IMR-90 (cell line): ENCODE measurements at regions of chr17 and their contacts with region 1.

Region 1: GRCh38 chr17:51289696-51290111 is 29.4 kb downstream of the UTP18 start:
- DNase-seq: peak; percentile 22
- ATAC-seq: peak; percentile 92
- H3K4me3 ChIP-seq: no peak overlapping the region
- H3K27ac ChIP-seq: peak overlapping the region; percentile 80; the same call in 1 of the 2 replicates
- H3K4me1 ChIP-seq: peaks cover 8% of the 10 kb centered on the region
- H3K27me3 ChIP-seq: no peaks in the 10 kb centered on the region
- CTCF ChIP-seq: no peak
- POLR2A ChIP-seq: no peak
- RAD21 ChIP-seq: no peak

Region 2: GRCh38 chr17:51257150-51258081 is 32.3 kb before region 1 on chr17:
- CTCF ChIA-PET with region 1: no interaction called
- POLR2A ChIA-PET with region 1: no interaction called
- dilution Hi-C with region 1: no loop called
- in situ Hi-C with region 1: no loop called
- intact Hi-C with region 1: no loop called
- DNase-seq: no peak
- ATAC-seq: no peak
- H3K4me3 ChIP-seq: no peak overlapping the region
- H3K27ac ChIP-seq: no peak overlapping the region
- H3K4me1 ChIP-seq: no peaks in the 10 kb centered on the region; the same call in 1 of the 2 replicates
- H3K27me3 ChIP-seq: no peaks in the 10 kb centered on the region
- CTCF ChIP-seq: no peak
- POLR2A ChIP-seq: no peak
- RAD21 ChIP-seq: no peak

Region 3: GRCh38 chr17:52846325-52846724 is 1556.6 kb after region 1 on chr17:
- CTCF ChIA-PET with region 1: no interaction called
- POLR2A ChIA-PET with region 1: no interaction called
- dilution Hi-C with region 1: no loop called
- in situ Hi-C with region 1: no loop called
- intact Hi-C with region 1: loop called (anchors 5 kb)
- DNase-seq: no peak
- ATAC-seq: no peak
- H3K4me3 ChIP-seq: no peak overlapping the region
- H3K27ac ChIP-seq: no peak overlapping the region
- H3K4me1 ChIP-seq: no peaks in the 10 kb centered on the region
- H3K27me3 ChIP-seq: no peaks in the 10 kb centered on the region
- CTCF ChIP-seq: no peak
- POLR2A ChIP-seq: no peak
- RAD21 ChIP-seq: no peak